Activated CD4-positive, alpha-beta T cell treated with anti-CD3 and anti-CD28 coated beads, Interleukin-2, amount 10 ng/mL, durations not matched to agents 7 days and 5 days (primary cell): ENCODE measurements at regions of chr3 and their contacts with region 1.

Region 1: GRCh38 chr3:113897373-113897777 is 50.4 kb upstream of the ZDHHC23 start:
- DNase-seq: no peak
- H3K4me3 Mint-ChIP-seq: no peak overlapping the region
- H3K27ac Mint-ChIP-seq: no peak overlapping the region
- H3K4me1 Mint-ChIP-seq: peaks cover 4% of the 10 kb centered on the region
- H3K27me3 Mint-ChIP-seq: peaks cover 4% of the 10 kb centered on the region

Region 2: DNA sequence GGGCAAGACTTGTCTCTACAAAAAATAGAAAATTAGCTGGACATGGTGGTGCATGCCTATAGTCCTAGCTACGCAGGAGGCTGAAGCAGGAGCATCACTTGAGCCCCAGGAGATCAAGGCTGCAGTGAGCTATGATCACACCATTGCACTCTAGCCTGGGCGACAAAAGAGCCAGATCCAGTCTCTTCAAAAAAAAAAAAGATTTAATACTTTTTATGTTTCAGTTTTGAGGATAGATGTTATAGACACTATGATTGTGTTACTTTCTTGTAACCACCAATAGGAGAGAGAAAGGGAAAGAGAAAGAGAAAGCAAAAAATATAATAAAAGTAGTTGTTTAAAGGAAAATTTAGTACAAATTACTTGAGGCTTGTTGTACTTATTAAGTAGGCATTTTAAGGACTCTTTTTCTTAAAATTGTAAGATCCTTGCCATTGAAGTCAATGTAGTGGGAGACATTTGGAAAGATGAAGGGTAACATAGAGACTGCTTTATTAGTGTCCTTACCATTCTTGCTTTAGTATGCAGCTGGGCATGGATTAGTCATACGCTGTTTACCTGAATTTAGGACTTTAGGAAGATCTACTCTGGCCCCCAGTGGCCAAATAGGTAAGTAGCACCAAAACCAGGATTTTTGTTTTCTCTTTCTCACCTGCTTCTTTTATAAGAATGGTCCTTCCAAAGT is 15.3 kb after region 1 on chr3:
- CTCF ChIA-PET with region 1: no interaction called
- POLR2A ChIA-PET with region 1: interaction called, 10 read pairs
- DNase-seq: peak; percentile 53
- H3K4me3 Mint-ChIP-seq: peak overlapping the region; percentile 51
- H3K27ac Mint-ChIP-seq: peak overlapping the region; percentile 79
- H3K4me1 Mint-ChIP-seq: peaks cover 9% of the 10 kb centered on the region
- H3K27me3 Mint-ChIP-seq: no peaks in the 10 kb centered on the region